Breast epithelium (tissue), 4 donors: ENCODE measurements at regions of chr21 and their contacts with region 1.

Region 1: DNA sequence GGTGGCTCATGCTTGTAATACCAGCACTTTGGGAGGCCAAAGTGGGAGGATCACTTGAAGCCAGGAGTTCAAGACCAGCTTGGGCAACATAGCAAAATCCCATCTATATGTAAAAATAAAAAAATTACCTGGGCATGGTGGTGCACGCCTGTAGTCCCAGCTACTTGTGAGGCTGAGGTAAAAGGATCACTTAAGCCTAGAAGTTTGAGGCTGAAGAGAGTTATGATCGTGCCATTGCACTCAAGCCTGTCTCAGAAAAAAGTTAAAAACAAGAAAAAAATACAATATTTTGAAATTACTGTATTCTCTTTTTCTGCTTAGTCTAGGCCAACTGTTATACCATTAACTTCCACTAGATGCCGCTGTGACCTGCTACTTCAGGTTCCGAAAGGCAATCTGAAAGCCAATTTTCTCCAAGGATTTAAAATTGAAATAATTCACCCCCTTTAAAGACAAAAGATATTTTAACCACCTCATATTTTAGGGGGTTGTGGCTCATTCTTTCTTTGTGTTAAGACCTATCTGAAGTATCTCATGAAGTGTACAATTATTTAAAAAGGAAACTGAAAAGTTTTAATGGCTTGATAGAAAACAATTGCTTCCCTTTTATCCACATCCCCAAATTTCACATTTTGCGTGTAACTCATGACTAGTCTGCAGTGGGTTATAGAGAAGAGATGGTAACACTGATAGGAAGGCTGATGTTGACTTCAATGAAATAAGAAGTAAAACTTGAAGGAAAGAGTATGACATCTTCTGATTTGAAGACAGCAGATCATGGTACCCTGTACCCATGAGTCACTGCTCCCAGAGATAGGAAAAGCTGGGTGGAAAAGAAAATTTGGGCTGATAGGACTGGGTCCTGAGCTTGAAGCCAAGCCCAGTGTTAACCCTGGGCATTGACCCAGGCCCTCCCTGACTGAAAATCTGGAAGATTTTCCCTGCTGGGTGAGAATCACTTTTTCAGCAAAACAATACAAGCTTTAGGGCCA is 24.4 kb upstream of the CLDN14 start:
- DNase-seq: no peak
- H3K4me3 ChIP-seq: no peak overlapping the region
- H3K27ac ChIP-seq: no peak overlapping the region
- H3K4me1 ChIP-seq: peaks cover 0 to 5% of the 10 kb centered on the region in 2 donors
- H3K27me3 ChIP-seq: no peaks in the 10 kb centered on the region
- CTCF ChIP-seq: peak; percentile 48 to 95 (median 92)
- POLR2A ChIP-seq: no peak

Region 2: GRCh38 chr21:36747815-36748383 is 243.5 kb after region 1 on chr21:
- intact Hi-C with region 1: loop called (anchors 10 kb)
- DNase-seq: no peak
- H3K4me3 ChIP-seq: peak overlapping the region; percentile 35 to 64 (median 44)
- H3K27ac ChIP-seq: no peak overlapping the region
- H3K4me1 ChIP-seq: no peaks in the 10 kb centered on the region
- H3K27me3 ChIP-seq: peaks cover 0 to 7% of the 10 kb centered on the region in 2 donors
- CTCF ChIP-seq: peak in 1 of 3 donors; percentile 36
- POLR2A ChIP-seq: no peak

Region 3: GRCh38 chr21:37945036-37945435 is 1440.7 kb after region 1 on chr21:
- intact Hi-C with region 1: no loop called
- DNase-seq: no peak
- H3K4me3 ChIP-seq: no peak overlapping the region
- H3K27ac ChIP-seq: no peak overlapping the region
- H3K4me1 ChIP-seq: no peaks in the 10 kb centered on the region
- H3K27me3 ChIP-seq: no peaks in the 10 kb centered on the region
- CTCF ChIP-seq: no peak
- POLR2A ChIP-seq: no peak